Activated naive CD4-positive, alpha-beta T cell treated with anti-CD3 and anti-CD28 coated beads, Interleukin-2, amount 10 ng/mL, durations not matched to agents 7 days and 5 days (primary cell): ENCODE measurements at regions of chr11 and their contacts with region 1.

Region 1: GRCh38 chr11:65779851-65780577 is 762 bp downstream of the AP5B1 start:
- DNase-seq: peak; percentile 90
- H3K4me3 Mint-ChIP-seq: peak overlapping the region; percentile 89
- H3K27ac Mint-ChIP-seq: peak overlapping the region; percentile 85
- H3K4me1 Mint-ChIP-seq: peaks cover 20% of the 10 kb centered on the region
- H3K27me3 Mint-ChIP-seq: peaks cover 35% of the 10 kb centered on the region

Region 2: GRCh38 chr11:65652511-65653231 is 127.3 kb before region 1 on chr11:
- CTCF ChIA-PET with region 1: no interaction called
- DNase-seq: peak; percentile 96
- H3K4me3 Mint-ChIP-seq: peak overlapping the region; percentile 80
- H3K27ac Mint-ChIP-seq: peak overlapping the region; percentile 89
- H3K4me1 Mint-ChIP-seq: peaks cover 46% of the 10 kb centered on the region
- H3K27me3 Mint-ChIP-seq: no peaks in the 10 kb centered on the region

Region 3: GRCh38 chr11:65711785-65712632 is 68.0 kb before region 1 on chr11 and contains the start of gene KAT5:
- CTCF ChIA-PET with region 1: interaction called, 29 read pairs
- DNase-seq: peak; percentile 99
- H3K4me3 Mint-ChIP-seq: peak within 1 kb of the TSS; percentile 87
- H3K27ac Mint-ChIP-seq: peak within 1 kb of the TSS; percentile 98
- H3K4me1 Mint-ChIP-seq: peaks cover 38% of the 10 kb centered on the region
- H3K27me3 Mint-ChIP-seq: peaks cover 16% of the 10 kb centered on the region

Region 4: GRCh38 chr11:65766535-65766934 is 13.5 kb before region 1 on chr11:
- CTCF ChIA-PET with region 1: interaction called, 29 read pairs
- DNase-seq: no peak
- H3K4me3 Mint-ChIP-seq: no peak overlapping the region
- H3K27ac Mint-ChIP-seq: no peak overlapping the region
- H3K4me1 Mint-ChIP-seq: peaks cover 3% of the 10 kb centered on the region
- H3K27me3 Mint-ChIP-seq: peaks cover 9% of the 10 kb centered on the region

Region 5: DNA sequence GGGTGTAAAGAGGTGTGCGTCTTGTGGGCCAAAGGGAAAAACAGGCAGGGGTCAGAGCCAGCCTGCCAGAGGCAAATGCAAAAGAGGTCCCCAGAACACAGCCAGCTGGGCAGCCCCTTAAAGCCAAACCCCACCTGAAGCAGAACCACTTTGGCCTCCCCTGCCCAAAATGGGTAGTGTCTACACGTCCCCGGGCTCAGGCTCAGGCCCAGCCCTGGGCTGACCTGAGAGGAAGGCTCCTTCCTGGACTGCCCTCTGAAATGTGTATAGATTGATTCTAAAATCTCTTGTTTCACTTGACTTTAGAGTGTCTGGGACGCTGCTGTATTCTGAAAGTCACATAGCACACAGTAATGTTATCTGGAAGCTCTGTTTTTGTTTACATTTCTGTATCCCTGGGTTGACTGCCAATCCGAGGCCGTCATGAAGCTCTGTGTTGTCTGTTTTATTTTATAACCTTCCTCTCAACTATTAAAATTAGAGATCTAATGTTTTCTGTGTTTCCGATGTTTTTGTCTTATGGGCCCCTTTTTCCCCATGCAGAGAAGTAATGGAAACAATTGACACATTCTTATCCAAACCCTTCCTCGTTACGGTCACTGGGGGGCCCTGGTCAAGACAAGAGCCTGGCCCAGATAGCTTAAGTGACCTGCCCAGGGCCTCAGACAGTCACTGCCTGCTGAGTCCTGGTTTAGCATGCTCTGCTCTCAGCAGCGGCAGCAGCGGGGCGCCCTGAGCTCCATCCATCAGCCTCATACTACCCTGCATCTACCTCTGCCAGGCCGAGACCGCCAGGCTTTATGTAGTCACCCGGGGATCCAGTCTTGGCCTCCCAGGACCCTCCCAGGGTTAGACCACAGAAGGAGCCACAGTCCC is 16.9 kb after region 1 on chr11:
- CTCF ChIA-PET with region 1: interaction called, 63 read pairs
- DNase-seq: no peak
- H3K4me3 Mint-ChIP-seq: no peak overlapping the region
- H3K27ac Mint-ChIP-seq: no peak overlapping the region
- H3K4me1 Mint-ChIP-seq: peaks cover 40% of the 10 kb centered on the region
- H3K27me3 Mint-ChIP-seq: peaks cover 94% of the 10 kb centered on the region

Region 6: GRCh38 chr11:65817835-65818742 is 38.1 kb after region 1 on chr11:
- CTCF ChIA-PET with region 1: interaction called, 128 read pairs
- DNase-seq: peak; percentile 94
- H3K4me3 Mint-ChIP-seq: peak overlapping the region; percentile 73
- H3K27ac Mint-ChIP-seq: peak overlapping the region; percentile 84
- H3K4me1 Mint-ChIP-seq: peaks cover 23% of the 10 kb centered on the region
- H3K27me3 Mint-ChIP-seq: peaks cover 15% of the 10 kb centered on the region

Region 7: GRCh38 chr11:65833297-65834030 is 53.5 kb after region 1 on chr11 and contains the start of gene SNX32:
- CTCF ChIA-PET with region 1: interaction called, 15 read pairs
- DNase-seq: peak; percentile 97
- H3K4me3 Mint-ChIP-seq: no peak within 1 kb of the TSS
- H3K27ac Mint-ChIP-seq: no peak within 1 kb of the TSS
- H3K4me1 Mint-ChIP-seq: peaks cover 11% of the 10 kb centered on the region
- H3K27me3 Mint-ChIP-seq: peaks cover 27% of the 10 kb centered on the region

Region 8: DNA sequence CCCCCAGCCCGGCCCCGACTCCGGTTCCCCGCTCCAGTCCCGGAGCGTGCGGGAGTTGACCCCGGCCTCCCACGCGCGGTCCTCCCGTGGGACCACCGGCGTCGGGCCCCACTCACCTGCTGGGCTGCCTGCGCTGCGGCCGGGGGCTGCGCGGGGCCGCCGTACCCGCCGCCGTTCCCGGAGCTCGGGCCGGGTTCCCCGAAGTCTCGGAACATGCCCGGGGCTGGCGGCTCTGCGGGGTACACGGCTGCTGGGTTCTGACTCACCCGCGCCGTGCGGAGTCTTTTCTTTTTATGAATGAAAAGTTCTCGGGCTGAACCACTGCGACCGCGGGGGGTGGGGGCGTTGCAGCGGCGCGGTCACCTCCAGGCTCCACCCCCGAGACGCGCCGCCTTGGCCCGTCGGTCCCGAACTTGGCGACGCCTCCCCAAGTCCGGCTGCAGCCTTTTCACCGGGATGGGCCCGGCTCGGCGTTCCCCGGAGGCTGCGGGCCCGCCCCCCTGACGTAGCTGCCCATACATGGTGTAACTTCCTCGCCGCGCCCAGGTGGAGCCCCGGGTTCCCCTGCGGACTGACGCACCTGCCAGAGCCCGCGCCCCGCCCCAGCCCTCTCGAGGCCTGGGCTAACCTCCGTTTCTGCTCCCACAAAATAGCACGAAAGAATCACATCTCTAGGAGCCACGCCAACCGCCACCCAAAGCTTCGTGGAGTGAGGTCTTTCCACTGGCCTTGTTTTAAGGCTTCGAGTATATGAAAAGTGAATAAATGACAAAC is 120.3 kb after region 1 on chr11 and contains the start of gene FOSL1:
- CTCF ChIA-PET with region 1: no interaction called
- DNase-seq: peak; percentile 96
- H3K4me3 Mint-ChIP-seq: peak within 1 kb of the TSS; percentile 69
- H3K27ac Mint-ChIP-seq: peak within 1 kb of the TSS; percentile 73
- H3K4me1 Mint-ChIP-seq: peaks cover 40% of the 10 kb centered on the region
- H3K27me3 Mint-ChIP-seq: peaks cover 52% of the 10 kb centered on the region